ENCODE measurements at regions of chr11 and their contacts with region 1.

Region 1: DNA sequence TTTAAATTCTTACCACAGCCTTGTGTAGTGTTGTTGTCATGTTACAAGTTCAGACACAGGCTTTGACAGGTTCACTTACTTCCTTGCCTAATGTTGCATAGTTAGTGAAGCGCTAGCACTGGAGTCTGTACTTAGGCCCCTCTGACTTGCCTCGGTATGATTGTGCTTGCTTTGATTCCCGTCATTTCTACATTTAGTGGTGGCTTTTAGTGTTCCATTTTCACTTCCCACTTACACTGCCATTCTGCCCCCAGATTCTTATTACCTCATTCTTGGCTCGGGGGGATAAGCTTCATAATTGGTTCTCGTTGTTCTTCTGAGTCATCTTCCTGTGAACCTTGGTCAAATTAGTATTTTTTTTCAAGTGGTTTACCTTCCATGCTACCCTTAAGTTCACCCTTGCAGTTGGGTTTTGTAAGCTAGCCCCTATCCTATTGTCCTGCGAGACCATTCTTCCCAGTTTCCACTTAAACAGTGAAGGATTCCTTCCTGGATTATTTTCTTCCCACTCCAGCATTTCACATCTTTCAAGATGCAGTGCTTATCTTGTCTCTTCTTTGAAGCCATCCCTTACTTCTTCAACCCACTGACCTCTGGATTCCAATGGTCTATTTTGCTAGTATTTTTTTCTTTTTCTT is 68.7 kb downstream of the DDX10 start:
- DNase-seq: no peak
- H3K4me3 ChIP-seq: no peak overlapping the region
- H3K27ac ChIP-seq: no peak overlapping the region
- H3K4me1 ChIP-seq: no peaks in the 10 kb centered on the region
- H3K27me3 ChIP-seq: no peaks in the 10 kb centered on the region
- CTCF ChIP-seq: no peak
- EP300 ChIP-seq: no peak
- POLR2A ChIP-seq: no peak
- RAD21 ChIP-seq: no peak

Region 2: GRCh38 chr11:108697872-108698473 is 35.6 kb before region 1 on chr11:
- CTCF ChIA-PET with region 1: interaction called, 13 read pairs
- POLR2A ChIA-PET with region 1: no interaction called
- DNase-seq: no peak
- H3K4me3 ChIP-seq: no peak overlapping the region
- H3K27ac ChIP-seq: no peak overlapping the region
- H3K4me1 ChIP-seq: no peaks in the 10 kb centered on the region
- H3K27me3 ChIP-seq: no peaks in the 10 kb centered on the region
- CTCF ChIP-seq: peak in 2 of 3 experiments; percentile 81 to 82; a peak in 3 of 4 replicates
- EP300 ChIP-seq: no peak
- POLR2A ChIP-seq: no peak
- RAD21 ChIP-seq: peak; percentile 94

Region 3: DNA sequence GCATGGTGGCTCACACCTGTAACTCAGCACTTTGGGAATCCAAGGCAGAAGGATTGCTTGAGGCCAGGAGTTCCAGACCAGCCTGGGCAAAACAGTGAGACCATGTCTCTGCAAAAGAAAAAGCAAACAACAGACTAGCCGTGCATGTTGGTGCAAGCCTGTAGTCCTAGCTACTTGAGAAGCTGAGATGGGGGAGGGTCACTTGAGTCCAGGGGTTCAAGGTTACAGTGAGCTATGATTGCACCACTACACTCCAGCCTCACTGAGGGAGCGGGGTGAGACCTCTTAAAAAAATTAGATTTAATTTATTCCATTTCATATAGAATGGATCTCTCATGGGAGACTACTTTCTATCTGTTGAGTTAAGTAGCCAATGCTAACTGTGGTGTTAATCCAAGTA is 18.4 kb before region 1 on chr11:
- CTCF ChIA-PET with region 1: interaction called, 18 read pairs
- POLR2A ChIA-PET with region 1: no interaction called
- DNase-seq: no peak
- H3K4me3 ChIP-seq: no peak overlapping the region
- H3K27ac ChIP-seq: no peak overlapping the region
- H3K4me1 ChIP-seq: no peaks in the 10 kb centered on the region
- H3K27me3 ChIP-seq: no peaks in the 10 kb centered on the region
- CTCF ChIP-seq: no peak
- EP300 ChIP-seq: no peak
- POLR2A ChIP-seq: no peak
- RAD21 ChIP-seq: no peak

Region 4: DNA sequence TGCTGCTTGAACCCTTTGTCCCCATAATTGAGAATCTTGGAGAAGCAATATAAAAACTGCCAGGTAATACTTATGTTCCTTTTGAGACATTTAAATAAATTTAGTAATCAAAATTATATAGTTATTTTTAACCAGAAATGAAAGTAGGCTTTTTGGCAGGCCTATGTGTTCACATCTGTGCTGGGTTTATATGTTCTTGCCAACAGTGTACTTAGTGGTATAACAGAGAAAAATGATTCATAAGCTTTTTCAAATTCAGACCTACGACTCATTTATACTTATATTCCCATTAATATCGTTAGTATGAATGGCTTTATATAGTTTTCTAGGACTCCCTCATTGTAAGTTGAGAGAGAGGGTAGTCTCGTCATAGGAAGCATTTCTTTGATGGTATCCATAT is 10.3 kb after region 1 on chr11:
- CTCF ChIA-PET with region 1: interaction called, 18 read pairs
- POLR2A ChIA-PET with region 1: interaction called, 4 read pairs
- DNase-seq: no peak
- H3K4me3 ChIP-seq: no peak overlapping the region
- H3K27ac ChIP-seq: no peak overlapping the region
- H3K4me1 ChIP-seq: no peaks in the 10 kb centered on the region
- H3K27me3 ChIP-seq: peaks cover 0 to 1% (median 0%) of the 10 kb centered on the region in 4 experiments; a peak in 1 of 7 replicates
- CTCF ChIP-seq: no peak
- EP300 ChIP-seq: no peak
- POLR2A ChIP-seq: no peak
- RAD21 ChIP-seq: no peak

Region 5: DNA sequence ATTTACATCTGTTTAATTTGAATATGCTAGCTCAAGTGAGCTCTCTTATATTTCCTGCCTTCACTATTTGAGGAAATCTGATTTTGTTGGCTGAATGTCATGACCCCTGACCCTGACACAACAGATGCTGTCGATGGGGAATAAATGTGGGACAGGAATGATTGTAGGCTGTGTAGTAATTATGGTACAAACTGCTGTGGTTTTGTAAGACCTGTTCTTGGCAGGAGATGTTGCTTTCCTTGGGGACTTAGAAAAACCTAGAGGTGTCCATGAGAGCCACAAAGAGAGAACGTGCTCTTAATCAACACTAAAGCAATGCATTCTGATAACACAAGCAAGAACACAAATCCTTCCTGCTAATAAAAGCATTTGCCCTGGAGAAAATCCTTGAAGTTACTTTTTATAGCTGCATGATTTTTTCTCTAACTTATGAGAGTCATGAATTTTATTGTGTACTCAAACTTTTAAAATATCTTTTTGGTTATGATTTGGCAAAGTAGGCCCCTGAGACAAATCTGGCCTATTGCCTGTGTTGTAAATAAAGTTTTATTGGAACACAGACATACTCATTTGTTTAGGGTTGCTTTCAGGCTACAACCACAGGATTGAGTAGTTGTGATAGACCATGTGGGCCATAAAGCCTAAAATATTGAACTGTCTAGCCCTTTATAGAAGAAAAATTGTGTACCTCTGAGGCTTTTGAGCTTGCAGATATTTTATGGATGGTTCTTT is 21.5 kb after region 1 on chr11:
- CTCF ChIA-PET with region 1: interaction called, 18 read pairs
- POLR2A ChIA-PET with region 1: no interaction called
- DNase-seq: no peak
- H3K4me3 ChIP-seq: no peak overlapping the region
- H3K27ac ChIP-seq: no peak overlapping the region
- H3K4me1 ChIP-seq: peaks cover 0 to 6% (median 2%) of the 10 kb centered on the region in 4 experiments; a peak in 1 of 7 replicates
- H3K27me3 ChIP-seq: no peaks in the 10 kb centered on the region
- CTCF ChIP-seq: no peak
- EP300 ChIP-seq: no peak
- POLR2A ChIP-seq: no peak
- RAD21 ChIP-seq: no peak

Region 6: GRCh38 chr11:108788565-108789199 is 55.1 kb after region 1 on chr11:
- CTCF ChIA-PET with region 1: interaction called, 11 read pairs
- POLR2A ChIA-PET with region 1: no interaction called
- DNase-seq: peak in 1 of 2 experiments; percentile 52
- H3K4me3 ChIP-seq: no peak overlapping the region
- H3K27ac ChIP-seq: no peak overlapping the region
- H3K4me1 ChIP-seq: peaks cover 3 to 6% (median 4%) of the 10 kb centered on the region in 4 experiments
- H3K27me3 ChIP-seq: no peaks in the 10 kb centered on the region
- CTCF ChIP-seq: peak in 2 of 3 experiments; percentile 47 to 66; a peak in 2 of 4 replicates
- EP300 ChIP-seq: no peak
- POLR2A ChIP-seq: no peak
- RAD21 ChIP-seq: peak; percentile 52 to 65

Measured in H1 (cell line).